Thyroid gland (tissue), 4 donors: ENCODE measurements at regions of chr17 and their contacts with region 1.

Region 1: DNA sequence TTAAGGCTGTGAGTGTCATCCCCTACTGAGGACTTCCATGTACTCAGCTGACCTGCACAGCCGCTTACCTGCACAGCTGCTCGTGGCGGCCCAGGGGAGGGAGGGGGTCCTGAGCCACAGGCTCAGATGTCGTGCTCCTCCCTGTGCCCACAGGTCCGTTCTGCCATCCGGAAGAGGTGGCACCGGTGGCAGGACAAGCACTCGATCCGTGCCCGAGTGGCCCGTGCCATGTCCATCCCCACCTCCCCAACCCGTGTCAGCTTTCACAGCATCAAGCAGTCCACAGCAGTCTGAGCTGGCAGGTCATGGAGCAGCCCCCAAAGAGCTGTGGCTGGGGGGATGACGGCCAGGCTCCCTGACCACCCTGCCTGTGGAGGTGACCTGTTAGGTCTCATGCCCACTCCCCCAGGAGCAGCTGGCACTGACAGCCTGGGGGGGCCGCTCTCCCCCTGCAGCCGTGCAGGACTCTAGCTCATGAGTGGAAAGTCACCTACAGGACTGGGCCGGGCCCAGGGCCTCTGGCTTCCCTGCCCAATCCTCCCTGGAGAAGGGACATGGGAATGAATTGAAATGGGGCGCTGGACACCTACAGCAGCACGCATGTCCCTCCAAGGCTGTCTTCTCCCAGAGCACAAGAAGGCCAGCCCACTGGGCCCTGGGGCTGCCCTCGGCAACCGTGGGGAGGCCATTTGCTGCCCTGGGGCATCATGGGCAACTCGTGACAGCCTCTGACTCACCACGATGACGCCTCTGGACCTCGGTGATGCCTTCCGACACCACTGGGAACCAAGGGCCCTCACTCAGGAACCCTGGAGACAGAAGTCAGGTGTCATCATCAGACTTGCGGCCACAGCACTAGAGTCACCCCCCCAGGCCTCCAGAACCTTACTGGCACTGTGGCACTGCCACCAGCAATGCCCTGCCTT is 9.9 kb upstream of the SPPL2C start:
- DNase-seq: no peak
- H3K4me3 ChIP-seq: no peak overlapping the region
- H3K27ac ChIP-seq: no peak overlapping the region
- H3K4me1 ChIP-seq: no peaks in the 10 kb centered on the region
- H3K27me3 ChIP-seq: no peaks in the 10 kb centered on the region
- CTCF ChIP-seq: no peak
- POLR2A ChIP-seq: no peak

Region 2: GRCh38 chr17:45394913-45395568 is 439.7 kb before region 1 on chr17:
- intact Hi-C with region 1: loop called (anchors 10 kb)
- DNase-seq: peak; percentile 69 to 76
- H3K4me3 ChIP-seq: no peak overlapping the region
- H3K27ac ChIP-seq: no peak overlapping the region
- H3K4me1 ChIP-seq: peaks cover 0 to 7% of the 10 kb centered on the region in 2 donors
- H3K27me3 ChIP-seq: no peaks in the 10 kb centered on the region
- CTCF ChIP-seq: peak; percentile 69 to 86 (median 76)
- POLR2A ChIP-seq: no peak

Region 3: GRCh38 chr17:45640141-45640850 is 194.4 kb before region 1 on chr17:
- intact Hi-C with region 1: loop called (anchors 2 kb)
- DNase-seq: peak; percentile 69 to 74
- H3K4me3 ChIP-seq: no peak overlapping the region
- H3K27ac ChIP-seq: no peak overlapping the region
- H3K4me1 ChIP-seq: no peaks in the 10 kb centered on the region
- H3K27me3 ChIP-seq: no peaks in the 10 kb centered on the region
- CTCF ChIP-seq: peak; percentile 90 to 97 (median 94)
- POLR2A ChIP-seq: no peak

Region 4: GRCh38 chr17:45719335-45720071 is 115.2 kb before region 1 on chr17:
- intact Hi-C with region 1: loop called (anchors 5 kb)
- DNase-seq: no peak
- H3K4me3 ChIP-seq: no peak overlapping the region
- H3K27ac ChIP-seq: no peak overlapping the region
- H3K4me1 ChIP-seq: no peaks in the 10 kb centered on the region
- H3K27me3 ChIP-seq: no peaks in the 10 kb centered on the region
- CTCF ChIP-seq: peak in 1 of 6 experiments; percentile 22
- POLR2A ChIP-seq: no peak

Region 5: DNA sequence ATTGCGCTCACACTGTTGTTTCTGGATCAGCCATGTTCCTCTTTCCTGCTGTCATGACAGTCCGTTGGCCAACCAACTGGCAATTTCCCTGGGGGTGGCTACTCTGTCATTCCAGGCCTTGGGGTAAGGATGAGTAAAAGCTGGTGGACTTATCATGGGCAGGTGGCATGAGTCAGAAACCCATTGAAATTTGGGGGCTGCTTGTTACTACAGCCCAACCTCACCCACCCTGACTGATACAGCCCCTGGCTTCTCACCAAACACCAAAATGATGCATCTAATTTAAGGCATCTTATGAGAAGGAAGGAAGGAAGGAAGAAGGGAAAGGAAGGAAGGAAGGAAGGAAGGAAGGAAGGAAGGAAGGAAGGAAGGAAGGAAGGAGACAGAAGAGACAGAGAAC is 104.5 kb before region 1 on chr17:
- intact Hi-C with region 1: no loop called
- DNase-seq: no peak
- H3K4me3 ChIP-seq: no peak overlapping the region
- H3K27ac ChIP-seq: no peak overlapping the region
- H3K4me1 ChIP-seq: no peaks in the 10 kb centered on the region
- H3K27me3 ChIP-seq: no peaks in the 10 kb centered on the region
- CTCF ChIP-seq: no peak
- POLR2A ChIP-seq: no peak